ENCODE measurements at regions of chrX and their contacts with region 1.

Region 1: GRCh38 chrX:153763989-153764755 is at the start of gene PLXNB3:
- DNase-seq: peak; percentile 58
- ATAC-seq: peak; percentile 66
- H3K4me3 ChIP-seq: peak within 1 kb of the TSS; percentile 43
- H3K27ac ChIP-seq: peak within 1 kb of the TSS; percentile 94
- H3K4me1 ChIP-seq: peaks cover 17% of the 10 kb centered on the region
- H3K27me3 ChIP-seq: no peaks in the 10 kb centered on the region
- CTCF ChIP-seq: peak; percentile 72
- POLR2A ChIP-seq: no peak
- RAD21 ChIP-seq: peak; percentile 80
- total RNA-seq, gene PLXNB3: 0.36 and 1.7 TPM in 2 replicates

Region 2: DNA sequence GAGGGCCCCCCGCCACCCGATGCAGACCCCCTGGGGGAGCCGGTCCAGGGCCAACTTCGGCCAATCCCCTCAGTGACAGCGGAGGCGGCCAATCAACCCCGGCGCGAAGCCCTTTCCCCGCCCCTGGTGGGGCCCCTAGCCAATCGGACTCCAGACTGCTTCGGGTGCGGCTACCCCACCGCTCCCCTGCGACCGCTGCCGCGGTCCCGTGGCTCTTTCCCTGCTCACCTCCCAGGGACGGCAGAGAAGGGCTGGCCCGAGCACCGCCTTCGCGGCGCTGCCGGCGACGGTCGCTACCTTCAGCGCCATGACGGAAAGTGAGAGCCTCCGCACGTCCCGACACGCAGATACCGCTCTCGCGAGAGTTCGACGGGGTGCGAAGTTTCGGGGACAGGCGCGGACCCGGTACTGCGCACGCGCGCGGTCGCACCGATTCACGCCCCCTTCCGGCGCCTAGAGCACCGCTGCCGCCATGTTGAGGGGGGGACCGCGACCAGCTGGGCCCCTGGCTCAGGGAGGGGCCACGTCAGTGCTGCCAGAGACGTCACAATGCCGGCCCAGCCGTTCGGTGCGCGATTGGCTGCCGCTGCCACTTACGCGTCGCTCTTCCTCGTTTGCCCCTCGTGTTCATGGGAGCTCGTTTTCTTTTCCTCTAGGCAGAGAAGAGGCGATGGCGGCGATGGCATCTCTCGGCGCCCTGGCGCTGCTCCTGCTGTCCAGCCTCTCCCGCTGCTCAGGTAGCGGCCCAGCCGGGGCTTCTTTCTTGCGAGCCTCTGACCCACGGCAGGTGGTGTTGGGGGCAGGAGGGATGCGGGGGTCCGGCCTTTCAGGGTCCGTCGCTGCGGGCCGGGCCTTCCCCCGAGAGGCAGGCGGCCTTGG is 30.1 kb after region 1 on chrX and contains the starts of genes IDH3G and SSR4:
- CTCF ChIA-PET with region 1: no interaction called
- POLR2A ChIA-PET with region 1: no interaction called
- dilution Hi-C with region 1: no loop called
- in situ Hi-C with region 1: no loop called
- intact Hi-C with region 1: loop called (anchors 1 kb)
- DNase-seq: peak; percentile 93
- ATAC-seq: peak; percentile 92
- H3K4me3 ChIP-seq: peak within 1 kb of the TSS; percentile 94
- H3K27ac ChIP-seq: peak within 1 kb of the TSS; percentile 99
- H3K4me1 ChIP-seq: peaks cover 4% of the 10 kb centered on the region; the same call in 1 of the 2 replicates
- H3K27me3 ChIP-seq: no peaks in the 10 kb centered on the region
- CTCF ChIP-seq: peak; percentile 28; the same call in 1 of the 2 replicates
- POLR2A ChIP-seq: peak; percentile 73
- RAD21 ChIP-seq: no peak
- total RNA-seq, gene IDH3G: 75.8 and 79.4 TPM in 2 replicates
- total RNA-seq, gene SSR4: 118 and 141 TPM in 2 replicates

Region 3: GRCh38 chrX:153947009-153947769 is 183.0 kb after region 1 on chrX:
- CTCF ChIA-PET with region 1: interaction called, 3 read pairs
- POLR2A ChIA-PET with region 1: no interaction called
- dilution Hi-C with region 1: no loop called
- in situ Hi-C with region 1: no loop called
- intact Hi-C with region 1: loop called (anchors 1 kb)
- DNase-seq: peak; percentile 68
- ATAC-seq: peak; percentile 91
- H3K4me3 ChIP-seq: no peak overlapping the region
- H3K27ac ChIP-seq: no peak overlapping the region
- H3K4me1 ChIP-seq: no peaks in the 10 kb centered on the region
- H3K27me3 ChIP-seq: no peaks in the 10 kb centered on the region
- CTCF ChIP-seq: peak; percentile 89
- POLR2A ChIP-seq: no peak
- RAD21 ChIP-seq: peak; percentile 62

Region 4: GRCh38 chrX:153953342-153953830 is 189.2 kb after region 1 on chrX:
- CTCF ChIA-PET with region 1: interaction called, 4 read pairs
- POLR2A ChIA-PET with region 1: no interaction called
- dilution Hi-C with region 1: no loop called
- in situ Hi-C with region 1: no loop called
- intact Hi-C with region 1: loop called (anchors 1 kb)
- DNase-seq: peak; percentile 50
- ATAC-seq: peak; percentile 92
- H3K4me3 ChIP-seq: no peak overlapping the region
- H3K27ac ChIP-seq: peak overlapping the region; percentile 61
- H3K4me1 ChIP-seq: peaks cover 4% of the 10 kb centered on the region
- H3K27me3 ChIP-seq: no peaks in the 10 kb centered on the region
- CTCF ChIP-seq: peak; percentile 85
- POLR2A ChIP-seq: no peak
- RAD21 ChIP-seq: peak; percentile 82

Region 5: DNA sequence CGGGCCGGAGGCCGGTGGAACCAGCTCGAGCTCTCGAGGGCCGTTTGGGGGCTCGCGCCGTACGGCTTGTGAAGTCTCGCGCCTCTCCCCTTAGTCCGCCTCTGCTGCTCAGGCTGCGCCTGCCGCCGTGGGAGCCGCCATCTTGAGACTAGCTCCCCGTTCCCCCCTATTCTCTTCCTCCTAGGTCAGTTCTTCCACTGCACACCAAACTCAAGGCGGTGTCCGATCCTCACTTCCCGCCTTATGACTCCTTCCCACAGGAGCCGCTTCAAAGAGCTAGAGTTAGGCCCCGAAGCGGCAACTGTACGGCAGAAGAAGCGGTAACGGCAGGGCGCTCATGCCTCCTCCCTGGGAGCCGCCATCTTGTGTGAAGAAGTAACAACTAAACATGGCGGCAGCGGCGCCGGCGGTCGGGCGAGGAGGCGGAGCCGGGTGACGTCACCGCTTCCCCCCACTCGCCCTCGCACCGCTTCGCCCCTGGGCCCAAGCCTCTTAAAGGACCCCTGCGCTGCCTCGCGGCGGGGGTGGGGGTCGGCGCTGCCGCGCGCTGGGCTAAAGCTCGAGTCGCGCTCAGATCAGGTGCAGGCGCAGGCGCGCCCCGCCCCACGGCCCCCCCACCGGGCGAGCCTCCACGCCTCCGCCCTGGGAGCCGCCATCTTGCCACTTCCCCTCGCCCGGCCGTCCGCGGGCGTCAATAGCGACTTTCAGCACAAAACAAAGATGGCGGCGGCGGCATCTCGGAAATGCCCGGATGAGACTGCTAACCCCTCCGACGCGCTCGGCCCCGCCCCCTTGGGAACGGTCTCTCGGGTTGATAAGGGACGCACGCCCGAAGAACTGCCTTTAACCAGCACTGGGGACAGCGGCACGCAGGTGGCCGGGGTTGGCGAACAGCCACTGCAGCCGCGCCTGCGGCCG is 207.5 kb after region 1 on chrX and contains the start of gene HCFC1:
- CTCF ChIA-PET with region 1: no interaction called
- POLR2A ChIA-PET with region 1: no interaction called
- dilution Hi-C with region 1: no loop called
- in situ Hi-C with region 1: loop called (anchors 10 kb)
- intact Hi-C with region 1: no loop called
- DNase-seq: peak; percentile 84
- ATAC-seq: peak; percentile 40
- H3K4me3 ChIP-seq: peak within 1 kb of the TSS; percentile 96
- H3K27ac ChIP-seq: peak within 1 kb of the TSS; percentile 100
- H3K4me1 ChIP-seq: peaks cover 19% of the 10 kb centered on the region
- H3K27me3 ChIP-seq: no peaks in the 10 kb centered on the region
- CTCF ChIP-seq: no peak
- POLR2A ChIP-seq: peak; percentile 82
- RAD21 ChIP-seq: no peak
- total RNA-seq, gene HCFC1: 3.2 and 4.4 TPM in 2 replicates